ENCODE measurements at regions of chr17 and their contacts with region 1.

Region 1: DNA sequence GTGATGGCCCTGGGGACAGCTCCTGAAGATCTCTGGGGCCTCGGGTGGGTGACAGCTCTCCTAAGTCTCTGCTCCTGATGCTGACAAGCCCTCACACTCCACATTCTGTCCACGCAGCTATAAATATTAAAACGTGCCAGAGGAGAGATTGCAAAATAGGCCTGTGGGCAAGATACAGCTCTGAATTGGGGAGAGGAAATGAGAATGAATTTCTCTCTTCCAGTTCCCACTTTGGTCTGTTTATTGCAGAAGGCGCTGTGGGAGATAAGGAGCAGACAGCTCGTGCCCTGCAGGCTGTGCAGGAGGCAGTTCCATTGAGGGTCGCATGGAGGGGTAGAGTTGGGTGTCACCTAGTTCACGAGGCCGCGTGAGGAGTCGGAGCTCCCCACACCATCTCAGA is 87.5 kb upstream of the SDK2 start:
- DNase-seq: no peak
- H3K4me3 ChIP-seq: no peak overlapping the region
- H3K27ac ChIP-seq: no peak overlapping the region
- H3K4me1 ChIP-seq: no peaks in the 10 kb centered on the region
- H3K27me3 ChIP-seq: no peaks in the 10 kb centered on the region
- CTCF ChIP-seq: no peak

Region 2: GRCh38 chr17:74018115-74018514 is 286.4 kb after region 1 on chr17:
- CTCF ChIA-PET with region 1: interaction called, 18 read pairs
- dilution Hi-C with region 1: no loop called
- in situ Hi-C with region 1: no loop called
- intact Hi-C with region 1: no loop called
- DNase-seq: no peak
- H3K4me3 ChIP-seq: no peak overlapping the region
- H3K27ac ChIP-seq: no peak overlapping the region
- H3K4me1 ChIP-seq: no peaks in the 10 kb centered on the region
- H3K27me3 ChIP-seq: no peaks in the 10 kb centered on the region
- CTCF ChIP-seq: no peak